CD8-positive, alpha-beta T cell (primary cell): ENCODE measurements at regions of chr19 and their contacts with region 1.

Region 1: GRCh38 chr19:38335949-38336637 is 463 bp downstream of the CATSPERG start:
- DNase-seq: peak; percentile 85 to 96 (median 95)
- ATAC-seq: peak; percentile 66
- H3K4me3 ChIP-seq: peak overlapping the region; percentile 85 to 94
- H3K4me3 Mint-ChIP-seq: peak overlapping the region; percentile 89
- H3K27ac ChIP-seq: peak overlapping the region; percentile 84 to 95
- H3K27ac Mint-ChIP-seq: peak overlapping the region; percentile 97
- H3K4me1 ChIP-seq: peaks cover 10% of the 10 kb centered on the region
- H3K4me1 Mint-ChIP-seq: peaks cover 17% of the 10 kb centered on the region
- H3K27me3 ChIP-seq: no peaks in the 10 kb centered on the region
- H3K27me3 Mint-ChIP-seq: no peaks in the 10 kb centered on the region
- CTCF ChIP-seq: no peak

Region 2: GRCh38 chr19:37779127-37780005 is 556.7 kb before region 1 on chr19 and contains the start of gene ZNF573:
- CTCF ChIA-PET with region 1: no interaction called
- POLR2A ChIA-PET with region 1: no interaction called
- intact Hi-C with region 1: loop called in 1 of 2 experiments (anchors 5 kb)
- DNase-seq: peak; percentile 66 to 99 (median 82)
- ATAC-seq: peak; percentile 84
- H3K4me3 ChIP-seq: peak within 1 kb of the TSS; percentile 67 to 70
- H3K4me3 Mint-ChIP-seq: peak within 1 kb of the TSS; percentile 97
- H3K27ac ChIP-seq: peak within 1 kb of the TSS; percentile 96 to 98
- H3K27ac Mint-ChIP-seq: peak within 1 kb of the TSS; percentile 91
- H3K4me1 ChIP-seq: peaks cover 12% of the 10 kb centered on the region
- H3K4me1 Mint-ChIP-seq: peaks cover 46% of the 10 kb centered on the region
- H3K27me3 ChIP-seq: no peaks in the 10 kb centered on the region
- H3K27me3 Mint-ChIP-seq: no peaks in the 10 kb centered on the region
- CTCF ChIP-seq: no peak
- total RNA-seq, gene ZNF573: 3.9 to 5.8 TPM

Region 3: GRCh38 chr19:38263689-38264485 is 72.2 kb before region 1 on chr19:
- CTCF ChIA-PET with region 1: interaction called, 11 read pairs
- POLR2A ChIA-PET with region 1: interaction called, 6 read pairs
- intact Hi-C with region 1: loop called (anchors 1 kb)
- DNase-seq: peak; percentile 42 to 86 (median 74)
- ATAC-seq: peak; percentile 92
- H3K4me3 ChIP-seq: peak overlapping the region; percentile 62 to 89
- H3K4me3 Mint-ChIP-seq: peak overlapping the region; percentile 88
- H3K27ac ChIP-seq: peak overlapping the region in 1 of 2 experiments; percentile 63
- H3K27ac Mint-ChIP-seq: peak overlapping the region; percentile 79
- H3K4me1 ChIP-seq: peaks cover 24% of the 10 kb centered on the region
- H3K4me1 Mint-ChIP-seq: peaks cover 42% of the 10 kb centered on the region
- H3K27me3 ChIP-seq: no peaks in the 10 kb centered on the region
- H3K27me3 Mint-ChIP-seq: peaks cover 2% of the 10 kb centered on the region
- CTCF ChIP-seq: no peak

Region 4: GRCh38 chr19:38374429-38375176 is 38.5 kb after region 1 on chr19 and contains the start of gene PSMD8:
- CTCF ChIA-PET with region 1: interaction called, 13 read pairs
- POLR2A ChIA-PET with region 1: interaction called, 20 read pairs
- intact Hi-C with region 1: loop called in 1 of 2 experiments (anchors 1 kb)
- DNase-seq: peak; percentile 95 to 100 (median 98)
- ATAC-seq: peak; percentile 97
- H3K4me3 ChIP-seq: peak within 1 kb of the TSS; percentile 71 to 84
- H3K4me3 Mint-ChIP-seq: peak within 1 kb of the TSS; percentile 99
- H3K27ac ChIP-seq: peak within 1 kb of the TSS; percentile 83 to 89
- H3K27ac Mint-ChIP-seq: peak within 1 kb of the TSS; percentile 96
- H3K4me1 ChIP-seq: peaks cover 19% of the 10 kb centered on the region
- H3K4me1 Mint-ChIP-seq: peaks cover 29% of the 10 kb centered on the region
- H3K27me3 ChIP-seq: no peaks in the 10 kb centered on the region
- H3K27me3 Mint-ChIP-seq: peaks cover 3% of the 10 kb centered on the region
- CTCF ChIP-seq: no peak
- total RNA-seq, gene PSMD8: 71.5 to 75.1 TPM

Region 5: DNA sequence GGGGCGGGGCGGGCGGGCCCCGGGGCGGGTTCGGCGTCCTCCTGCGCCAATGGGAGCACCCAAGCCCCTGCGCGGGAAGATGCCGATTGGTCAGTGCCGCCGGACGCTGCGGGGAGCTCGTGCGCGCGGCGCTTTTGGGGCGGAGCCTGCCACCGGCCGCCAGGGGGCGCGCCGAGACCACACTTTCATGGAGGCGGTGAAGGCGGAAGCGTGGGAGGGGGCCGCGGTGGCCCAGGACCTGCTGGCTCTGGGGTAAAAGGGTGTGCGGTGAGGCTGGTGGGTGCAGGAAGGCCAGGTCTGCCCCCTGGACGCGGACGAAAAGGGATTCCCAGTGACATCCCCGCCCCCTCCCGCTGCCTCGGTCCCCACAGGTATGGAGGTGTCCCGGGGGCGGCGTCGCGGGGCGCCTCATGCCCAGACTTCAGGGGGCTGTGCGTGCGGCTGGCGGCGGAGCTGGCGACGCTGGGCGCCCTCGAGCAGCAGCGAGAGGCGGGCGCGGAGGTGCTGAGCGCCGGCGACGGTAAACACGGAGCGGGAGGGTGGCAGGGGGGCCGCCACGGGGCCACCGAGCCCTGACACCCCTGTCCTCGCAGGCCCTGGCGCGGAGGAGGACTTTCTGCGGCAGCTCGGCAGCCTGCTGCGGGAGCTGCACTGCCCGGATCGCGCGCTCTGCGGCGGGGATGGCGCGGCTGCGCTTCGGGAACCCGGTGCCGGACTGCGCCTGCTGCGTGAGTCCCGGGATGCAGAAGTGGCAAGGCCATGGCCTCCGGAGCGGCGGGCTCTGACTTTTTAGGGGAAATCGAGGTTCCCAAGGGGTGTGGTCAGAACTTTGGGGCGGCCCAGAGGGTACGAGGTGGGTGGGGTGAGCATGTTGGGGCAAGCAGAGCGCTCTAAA is 67.1 kb after region 1 on chr19 and contains the start of gene FAM98C:
- CTCF ChIA-PET with region 1: interaction called, 4 read pairs
- POLR2A ChIA-PET with region 1: interaction called, 5 read pairs
- intact Hi-C with region 1: loop called (anchors 1 kb)
- DNase-seq: peak; percentile 95 to 99 (median 97)
- ATAC-seq: peak; percentile 96
- H3K4me3 ChIP-seq: peak within 1 kb of the TSS; percentile 76 to 95
- H3K4me3 Mint-ChIP-seq: peak within 1 kb of the TSS; percentile 94
- H3K27ac ChIP-seq: peak within 1 kb of the TSS; percentile 79 to 81
- H3K27ac Mint-ChIP-seq: peak within 1 kb of the TSS; percentile 98
- H3K4me1 ChIP-seq: peaks cover 11% of the 10 kb centered on the region
- H3K4me1 Mint-ChIP-seq: peaks cover 15% of the 10 kb centered on the region
- H3K27me3 ChIP-seq: no peaks in the 10 kb centered on the region
- H3K27me3 Mint-ChIP-seq: no peaks in the 10 kb centered on the region
- CTCF ChIP-seq: peak; percentile 95
- total RNA-seq, gene FAM98C: 28.2 to 29.3 TPM